Activated CD4-positive, alpha-beta T cell treated with anti-CD3 and anti-CD28 coated beads for 36 hours (primary cell): ENCODE measurements at regions of chr2 and their contacts with region 1.

Region 1: GRCh38 chr2:152717228-152718075 is at the start of gene PRPF40A:
- DNase-seq: peak; percentile 99
- ATAC-seq: peak; percentile 82
- H3K4me3 Mint-ChIP-seq: peak within 1 kb of the TSS; percentile 99
- H3K27ac Mint-ChIP-seq: peak within 1 kb of the TSS; percentile 99
- H3K4me1 Mint-ChIP-seq: peaks cover 61% of the 10 kb centered on the region
- H3K27me3 Mint-ChIP-seq: no peaks in the 10 kb centered on the region
- total RNA-seq, gene PRPF40A: 145 to 152 TPM

Region 2: DNA sequence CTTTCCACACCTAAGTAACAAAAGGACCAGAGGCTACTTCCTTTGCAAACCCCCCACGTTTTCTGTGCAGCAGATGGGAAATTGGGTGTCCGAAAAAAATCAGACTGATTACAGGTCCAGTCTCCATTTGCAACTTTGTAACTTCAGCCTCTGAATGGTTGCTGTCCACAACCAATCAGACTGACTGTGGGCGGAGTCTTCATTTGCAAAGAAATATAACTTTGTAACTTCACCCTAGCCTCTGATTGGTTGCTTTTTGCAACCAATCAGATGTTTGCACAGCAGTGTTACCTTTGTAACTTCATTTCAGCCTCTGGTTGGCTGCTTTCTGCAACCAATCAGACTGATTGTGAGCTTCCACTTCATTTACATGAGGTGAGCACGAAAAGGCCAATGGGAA is 590.8 kb before region 1 on chr2:
- CTCF ChIA-PET with region 1: no interaction called
- POLR2A ChIA-PET with region 1: no interaction called
- intact Hi-C with region 1: no loop called
- DNase-seq: no peak
- ATAC-seq: no peak
- H3K4me3 Mint-ChIP-seq: no peak overlapping the region
- H3K27ac Mint-ChIP-seq: no peak overlapping the region
- H3K4me1 Mint-ChIP-seq: no peaks in the 10 kb centered on the region
- H3K27me3 Mint-ChIP-seq: no peaks in the 10 kb centered on the region

Region 3: DNA sequence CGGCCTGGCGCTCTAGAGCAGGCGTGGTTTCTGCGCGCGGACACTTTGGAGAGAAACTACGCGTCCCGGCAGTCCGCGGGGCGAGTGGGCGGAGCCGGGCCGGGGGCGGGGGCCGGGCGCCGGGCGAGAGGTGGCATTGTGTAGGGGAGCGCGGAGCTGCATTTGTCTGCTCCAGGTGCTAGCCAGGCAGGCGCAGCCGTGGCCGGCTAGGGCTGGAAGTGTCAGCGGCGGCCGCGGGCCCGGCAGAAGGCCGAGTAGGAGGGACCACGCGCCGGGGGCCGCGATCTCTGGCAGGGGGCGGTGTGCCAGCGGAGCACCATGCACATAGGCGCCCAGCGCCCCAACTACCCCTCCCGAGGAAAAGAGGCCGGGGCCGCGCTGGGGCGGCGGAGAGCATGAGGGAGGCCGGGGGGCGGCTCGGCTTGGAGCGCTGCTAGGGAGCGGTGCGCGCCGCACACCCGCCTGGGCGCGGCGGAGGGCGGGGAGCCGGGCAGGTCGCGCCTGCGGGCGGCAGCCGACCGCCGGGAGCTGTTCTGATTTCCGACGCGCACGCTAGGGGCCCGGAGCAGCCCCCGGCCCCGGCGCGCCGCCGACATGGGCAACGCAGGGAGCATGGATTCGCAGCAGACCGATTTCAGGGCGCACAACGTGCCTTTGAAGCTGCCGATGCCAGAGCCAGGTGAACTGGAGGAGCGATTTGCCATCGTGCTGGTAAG is 382.3 kb before region 1 on chr2 and contains the start of gene FMNL2:
- CTCF ChIA-PET with region 1: no interaction called
- POLR2A ChIA-PET with region 1: no interaction called
- intact Hi-C with region 1: loop called in 1 of 2 experiments (anchors 5 kb)
- DNase-seq: peak; percentile 80
- ATAC-seq: peak; percentile 83
- H3K4me3 Mint-ChIP-seq: peak within 1 kb of the TSS; percentile 73
- H3K27ac Mint-ChIP-seq: no peak within 1 kb of the TSS
- H3K4me1 Mint-ChIP-seq: peaks cover 11% of the 10 kb centered on the region
- H3K27me3 Mint-ChIP-seq: peaks cover 44% of the 10 kb centered on the region
- total RNA-seq, gene FMNL2: 3.0 to 3.3 TPM

Region 4: GRCh38 chr2:152421521-152422370 is 295.7 kb before region 1 on chr2:
- CTCF ChIA-PET with region 1: interaction called, 3 read pairs
- POLR2A ChIA-PET with region 1: no interaction called
- intact Hi-C with region 1: loop called in 1 of 2 experiments (anchors 5 kb)
- DNase-seq: peak; percentile 27
- ATAC-seq: peak; percentile 82
- H3K4me3 Mint-ChIP-seq: no peak overlapping the region
- H3K27ac Mint-ChIP-seq: no peak overlapping the region
- H3K4me1 Mint-ChIP-seq: peaks cover 12% of the 10 kb centered on the region
- H3K27me3 Mint-ChIP-seq: peaks cover 13% of the 10 kb centered on the region

Region 5: GRCh38 chr2:152620208-152620607 is 97.2 kb before region 1 on chr2:
- CTCF ChIA-PET with region 1: no interaction called
- POLR2A ChIA-PET with region 1: no interaction called
- intact Hi-C with region 1: no loop called
- DNase-seq: no peak
- ATAC-seq: no peak
- H3K4me3 Mint-ChIP-seq: no peak overlapping the region
- H3K27ac Mint-ChIP-seq: no peak overlapping the region
- H3K4me1 Mint-ChIP-seq: no peaks in the 10 kb centered on the region
- H3K27me3 Mint-ChIP-seq: peaks cover 2% of the 10 kb centered on the region

Region 6: GRCh38 chr2:152648336-152648735 is 69.1 kb before region 1 on chr2:
- CTCF ChIA-PET with region 1: interaction called, 3 read pairs
- POLR2A ChIA-PET with region 1: interaction called, 3 read pairs
- intact Hi-C with region 1: loop called in 1 of 2 experiments (anchors 5 kb)
- DNase-seq: no peak
- ATAC-seq: peak; percentile 30
- H3K4me3 Mint-ChIP-seq: no peak overlapping the region
- H3K27ac Mint-ChIP-seq: no peak overlapping the region
- H3K4me1 Mint-ChIP-seq: no peaks in the 10 kb centered on the region
- H3K27me3 Mint-ChIP-seq: no peaks in the 10 kb centered on the region

Region 7: GRCh38 chr2:152694161-152694661 is 23.2 kb before region 1 on chr2:
- CTCF ChIA-PET with region 1: interaction called, 17 read pairs
- POLR2A ChIA-PET with region 1: interaction called, 4 read pairs
- intact Hi-C with region 1: loop called (anchors 1 kb)
- DNase-seq: peak; percentile 70
- ATAC-seq: peak; percentile 92
- H3K4me3 Mint-ChIP-seq: peak overlapping the region; percentile 66
- H3K27ac Mint-ChIP-seq: peak overlapping the region; percentile 68
- H3K4me1 Mint-ChIP-seq: peaks cover 37% of the 10 kb centered on the region
- H3K27me3 Mint-ChIP-seq: no peaks in the 10 kb centered on the region

Region 8: DNA sequence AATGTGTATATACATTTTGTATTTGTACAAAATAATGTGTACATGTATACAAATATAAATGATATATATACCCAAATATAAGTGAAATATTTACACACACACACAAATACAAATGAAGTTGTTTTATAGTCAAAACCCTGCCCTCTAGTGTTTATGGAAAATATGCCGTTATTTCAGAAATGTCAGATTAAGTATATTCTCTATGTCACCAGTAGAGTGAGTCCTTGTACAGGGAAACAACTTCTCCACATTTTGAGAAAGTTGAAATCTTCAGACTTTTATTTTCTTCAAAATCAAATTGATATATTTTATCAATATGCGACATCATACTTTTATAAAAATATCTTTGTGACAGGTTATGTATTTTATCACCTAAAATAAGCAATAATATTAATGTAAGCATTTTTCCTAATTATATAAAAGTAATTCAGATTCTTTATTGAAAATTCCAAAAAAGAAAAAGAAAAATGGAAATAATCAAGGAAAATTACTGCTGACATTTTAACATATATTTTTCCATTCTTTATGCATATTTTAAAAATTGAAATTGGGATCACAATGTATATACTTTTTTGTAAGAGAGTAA is 23.4 kb after region 1 on chr2:
- CTCF ChIA-PET with region 1: interaction called, 10 read pairs
- POLR2A ChIA-PET with region 1: no interaction called
- intact Hi-C with region 1: no loop called
- DNase-seq: no peak
- ATAC-seq: peak; percentile 69
- H3K4me3 Mint-ChIP-seq: no peak overlapping the region
- H3K27ac Mint-ChIP-seq: no peak overlapping the region
- H3K4me1 Mint-ChIP-seq: peaks cover 2% of the 10 kb centered on the region
- H3K27me3 Mint-ChIP-seq: no peaks in the 10 kb centered on the region